Activated CD4-positive, alpha-beta T cell treated with anti-CD3 and anti-CD28 coated beads, Interleukin-2, amount 10 ng/mL, durations not matched to agents 24 days and 14 days (primary cell): ENCODE measurements at regions of chr2 and their contacts with region 1.

Region 1: DNA sequence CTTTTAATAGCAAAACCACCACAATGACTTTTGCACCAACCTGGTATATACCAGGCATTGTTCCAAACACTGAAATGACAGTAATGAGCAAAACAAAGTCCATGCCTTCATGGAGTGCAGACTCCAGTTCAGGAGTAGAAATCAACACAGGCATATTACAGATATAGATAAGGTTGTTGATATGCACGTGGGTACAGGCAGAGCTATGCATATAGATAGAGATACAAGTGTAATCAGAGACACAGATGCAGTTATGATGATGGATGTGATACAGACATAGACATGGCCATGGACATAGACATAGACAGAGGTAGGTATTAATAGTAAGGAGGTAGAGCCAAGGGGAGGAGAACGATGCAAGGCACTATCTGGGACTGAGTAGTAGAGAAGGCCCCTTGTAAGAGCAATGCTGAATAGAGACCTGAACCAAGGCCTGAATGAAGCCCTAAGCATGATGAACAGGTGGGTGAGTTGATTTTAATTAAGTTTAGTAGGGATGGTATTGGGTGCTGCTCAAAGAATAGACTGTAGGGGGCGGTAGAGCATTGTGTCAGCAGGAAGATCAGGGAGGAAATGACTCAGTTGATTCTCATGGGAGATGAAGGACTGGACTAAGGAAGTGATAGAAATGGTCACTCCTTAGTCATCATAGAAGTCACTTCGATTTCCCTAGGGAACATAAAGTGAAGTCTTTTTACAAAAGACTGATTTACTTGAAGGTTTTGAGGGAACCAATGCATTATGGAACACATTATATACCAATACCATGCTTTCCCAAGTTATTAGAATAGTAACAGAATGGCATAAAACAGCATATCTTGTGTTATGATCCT is 39.4 kb downstream of the CMPK2 start:
- DNase-seq: peak; percentile 89
- H3K4me3 Mint-ChIP-seq: no peak overlapping the region
- H3K27ac Mint-ChIP-seq: no peak overlapping the region
- H3K4me1 Mint-ChIP-seq: peaks cover 14% of the 10 kb centered on the region
- H3K27me3 Mint-ChIP-seq: peaks cover 11% of the 10 kb centered on the region

Region 2: GRCh38 chr2:6877402-6878304 is 51.4 kb after region 1 on chr2 and contains the start of gene RSAD2:
- intact Hi-C with region 1: loop called (anchors 2 kb)
- DNase-seq: peak; percentile 88
- H3K4me3 Mint-ChIP-seq: peak within 1 kb of the TSS; percentile 90
- H3K27ac Mint-ChIP-seq: peak within 1 kb of the TSS; percentile 85
- H3K4me1 Mint-ChIP-seq: peaks cover 74% of the 10 kb centered on the region
- H3K27me3 Mint-ChIP-seq: no peaks in the 10 kb centered on the region
- total RNA-seq, gene RSAD2: 2.0 and 2.4 TPM in 2 replicates

Region 3: DNA sequence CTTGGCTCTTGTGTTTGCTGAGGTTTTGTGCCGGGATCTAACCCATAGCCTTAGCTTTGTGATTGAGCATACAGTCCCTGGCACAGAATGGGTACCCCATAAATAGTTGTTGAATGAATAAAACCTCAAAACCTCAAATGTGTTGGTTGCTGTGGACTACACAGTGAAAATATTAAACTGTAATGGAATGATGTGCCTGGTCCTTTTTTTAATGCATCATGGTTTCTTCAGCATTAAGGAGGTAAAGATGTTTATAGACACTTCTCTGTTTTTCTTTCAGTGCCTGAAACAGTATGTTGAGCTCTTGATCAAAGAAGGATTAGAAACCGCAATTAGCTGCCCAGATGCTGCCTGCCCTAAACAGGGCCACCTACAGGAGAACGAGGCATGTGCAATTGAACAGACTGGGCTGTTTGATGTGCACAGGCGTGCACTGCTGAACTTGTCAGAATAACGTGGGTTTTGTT is 187.9 kb after region 1 on chr2:
- intact Hi-C with region 1: loop called (anchors 10 kb)
- DNase-seq: peak; percentile 71
- H3K4me3 Mint-ChIP-seq: no peak overlapping the region
- H3K27ac Mint-ChIP-seq: peak overlapping the region; percentile 2
- H3K4me1 Mint-ChIP-seq: peaks cover 24% of the 10 kb centered on the region
- H3K27me3 Mint-ChIP-seq: no peaks in the 10 kb centered on the region

Region 4: DNA sequence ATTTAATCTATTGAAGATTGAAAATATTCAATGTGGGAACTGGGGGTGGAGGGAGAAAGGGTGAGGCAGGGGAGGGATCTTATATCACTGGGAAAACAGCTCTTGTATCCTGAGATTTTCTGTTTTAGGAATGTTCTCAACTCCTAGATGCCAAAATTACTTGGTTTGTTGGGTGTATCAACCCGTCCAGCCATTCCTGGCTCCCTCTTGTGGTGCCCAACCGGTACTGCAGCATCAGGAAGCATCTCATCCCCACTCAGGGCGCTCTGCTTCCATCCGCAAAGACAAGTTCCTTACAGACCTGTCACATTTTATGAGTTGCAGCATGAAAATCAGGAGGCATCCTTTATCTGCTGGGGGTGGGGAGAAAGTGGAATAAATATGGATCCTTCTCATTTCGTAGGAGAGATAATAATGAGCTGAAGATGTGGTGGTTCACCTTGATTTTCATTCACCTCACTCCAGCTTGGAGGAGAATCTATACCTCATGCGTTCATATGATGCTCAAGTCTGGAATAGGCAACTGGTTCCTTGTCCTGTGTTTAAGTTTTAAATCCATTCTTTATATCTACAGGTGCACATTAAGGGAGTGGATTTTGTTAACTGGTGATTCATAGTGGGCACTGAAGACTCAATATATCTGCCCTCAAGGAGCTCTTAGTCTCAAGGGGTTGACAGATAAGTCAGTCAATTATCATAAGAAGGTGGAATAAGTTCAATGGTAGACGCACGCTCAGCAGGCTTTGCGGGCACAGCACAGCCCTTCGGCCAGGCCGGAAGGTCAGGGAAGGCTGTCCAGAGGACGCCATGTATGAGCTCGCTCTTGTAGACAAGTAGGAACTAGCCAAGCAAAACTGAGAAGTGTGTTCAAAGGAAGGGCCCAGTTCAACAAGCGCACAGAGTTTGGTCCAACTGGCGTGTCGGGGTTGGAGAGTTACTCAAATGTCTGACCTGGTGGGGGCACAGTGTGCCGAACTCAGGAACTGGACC is 218.3 kb after region 1 on chr2:
- intact Hi-C with region 1: loop called (anchors 1 kb)
- DNase-seq: peak; percentile 88
- H3K4me3 Mint-ChIP-seq: no peak overlapping the region
- H3K27ac Mint-ChIP-seq: no peak overlapping the region
- H3K4me1 Mint-ChIP-seq: peaks cover 4% of the 10 kb centered on the region
- H3K27me3 Mint-ChIP-seq: no peaks in the 10 kb centered on the region

Region 5: DNA sequence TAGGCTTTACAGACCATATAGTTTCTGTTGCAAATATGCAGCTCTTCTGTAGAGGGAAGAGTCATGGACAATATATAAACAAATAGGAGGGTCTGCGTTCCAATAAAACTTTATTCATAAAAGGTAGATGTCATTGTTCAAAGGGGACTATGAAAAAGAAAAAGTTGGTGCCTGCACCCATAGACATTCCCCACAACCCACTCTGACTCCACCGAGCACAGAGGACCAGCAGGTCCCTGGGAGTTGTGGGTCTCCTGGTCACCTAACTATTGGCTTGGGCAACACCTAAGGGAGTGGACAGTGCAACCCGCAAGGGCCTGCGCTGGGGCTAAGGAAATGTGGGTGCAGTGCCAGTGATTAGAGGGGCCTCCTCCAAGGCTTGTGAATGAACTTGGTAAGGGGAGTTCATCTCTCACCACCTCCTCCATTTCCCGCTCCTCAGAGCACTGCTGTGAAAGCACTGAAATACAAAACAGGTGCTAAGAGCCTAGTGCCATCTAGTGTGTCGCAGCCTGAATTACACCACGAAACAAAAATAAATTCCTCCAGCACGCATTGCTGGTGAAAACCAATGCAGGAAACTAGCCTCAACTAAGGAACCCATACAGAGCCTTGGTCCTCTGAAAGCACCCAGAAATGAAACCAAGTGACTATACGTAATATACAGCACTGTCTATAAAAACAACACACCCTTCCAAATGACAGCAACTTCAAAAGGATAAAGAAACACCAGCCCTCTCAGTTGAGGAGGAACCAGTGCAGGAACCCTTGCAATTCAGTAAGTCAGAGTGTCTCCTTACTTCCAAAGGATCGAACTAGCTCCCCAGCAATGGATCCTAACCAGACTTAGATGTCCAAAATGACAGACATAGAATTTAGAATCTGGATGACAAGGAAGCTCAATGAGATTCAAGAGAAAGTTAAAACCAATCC is 257.5 kb after region 1 on chr2:
- intact Hi-C with region 1: loop called (anchors 1 kb)
- DNase-seq: peak; percentile 70
- H3K4me3 Mint-ChIP-seq: no peak overlapping the region
- H3K27ac Mint-ChIP-seq: no peak overlapping the region
- H3K4me1 Mint-ChIP-seq: no peaks in the 10 kb centered on the region
- H3K27me3 Mint-ChIP-seq: peaks cover 5% of the 10 kb centered on the region